PC-9 (cell line): ENCODE measurements at regions of chr12 and their contacts with region 1.

Region 1: DNA sequence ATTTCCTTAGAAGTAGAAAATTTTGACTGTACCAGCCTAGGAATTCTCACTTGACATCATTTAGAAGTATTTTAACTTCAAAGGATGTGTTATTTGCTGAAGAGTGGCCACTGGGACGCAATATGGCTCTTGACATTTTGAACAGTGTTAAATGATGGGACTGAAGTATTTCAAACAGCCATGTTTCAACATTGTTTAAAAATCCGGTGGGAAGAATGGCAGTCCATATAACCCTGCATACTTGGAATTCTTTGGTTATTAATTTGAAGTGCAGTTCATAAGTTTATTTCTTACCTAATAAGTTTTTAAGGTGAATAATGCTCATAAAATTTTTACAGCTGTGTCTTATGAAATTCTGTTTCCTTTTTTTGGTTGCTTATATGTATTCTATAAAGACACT is 8.2 kb downstream of the TMTC2 start:
- DNase-seq: peak in 1 of 2 experiments; percentile 75
- H3K4me3 ChIP-seq: no peak overlapping the region
- H3K27ac ChIP-seq: no peak overlapping the region
- H3K4me1 ChIP-seq: peaks cover 8% of the 10 kb centered on the region; the same call in 1 of the 2 replicates
- H3K27me3 ChIP-seq: no peaks in the 10 kb centered on the region
- CTCF ChIP-seq: no peak

Region 2: GRCh38 chr12:82638324-82638723 is 56.6 kb before region 1 on chr12:
- CTCF ChIA-PET with region 1: no interaction called
- POLR2A ChIA-PET with region 1: no interaction called
- intact Hi-C with region 1: no loop called
- DNase-seq: no peak
- H3K4me3 ChIP-seq: no peak overlapping the region
- H3K27ac ChIP-seq: no peak overlapping the region
- H3K4me1 ChIP-seq: no peaks in the 10 kb centered on the region
- H3K27me3 ChIP-seq: no peaks in the 10 kb centered on the region
- CTCF ChIP-seq: no peak

Region 3: GRCh38 chr12:82746668-82747067 is 51.7 kb after region 1 on chr12:
- CTCF ChIA-PET with region 1: no interaction called
- POLR2A ChIA-PET with region 1: no interaction called
- intact Hi-C with region 1: loop called (anchors 5 kb)
- DNase-seq: no peak
- H3K4me3 ChIP-seq: no peak overlapping the region
- H3K27ac ChIP-seq: no peak overlapping the region
- H3K4me1 ChIP-seq: no peaks in the 10 kb centered on the region
- H3K27me3 ChIP-seq: no peaks in the 10 kb centered on the region
- CTCF ChIP-seq: no peak

Region 4: GRCh38 chr12:82817368-82817767 is 122.4 kb after region 1 on chr12:
- CTCF ChIA-PET with region 1: no interaction called
- POLR2A ChIA-PET with region 1: no interaction called
- intact Hi-C with region 1: no loop called
- DNase-seq: no peak
- H3K4me3 ChIP-seq: no peak overlapping the region
- H3K27ac ChIP-seq: no peak overlapping the region
- H3K4me1 ChIP-seq: no peaks in the 10 kb centered on the region
- H3K27me3 ChIP-seq: no peaks in the 10 kb centered on the region
- CTCF ChIP-seq: no peak